Thyroid gland (tissue), 4 donors: ENCODE measurements at regions of chr11 and their contacts with region 1.

Region 1: DNA sequence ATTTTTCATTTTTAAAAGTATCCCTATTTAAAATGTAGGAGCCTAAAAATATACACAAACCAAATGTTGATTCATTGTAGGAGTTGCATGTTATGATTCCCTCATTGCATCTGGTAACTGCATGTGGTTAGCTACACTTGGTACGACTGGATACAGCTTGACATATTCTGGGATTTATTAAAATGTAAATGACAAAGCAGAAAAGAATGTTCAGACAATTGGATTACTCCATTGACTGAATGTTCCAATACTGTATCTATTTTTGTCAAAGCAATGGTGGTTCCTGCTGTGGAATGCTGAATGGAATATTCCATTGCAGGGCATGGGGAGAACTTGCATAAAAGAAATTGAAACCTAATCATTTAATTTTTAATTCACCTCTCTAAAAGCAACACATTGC is 30.8 kb downstream of the BLID start:
- DNase-seq: no peak
- H3K4me3 ChIP-seq: no peak overlapping the region
- H3K27ac ChIP-seq: no peak overlapping the region
- H3K4me1 ChIP-seq: peaks cover 18 to 20% of the 10 kb centered on the region in 2 donors
- H3K27me3 ChIP-seq: no peaks in the 10 kb centered on the region
- CTCF ChIP-seq: no peak
- POLR2A ChIP-seq: no peak

Region 2: GRCh38 chr11:121661880-121662486 is 423.3 kb before region 1 on chr11:
- intact Hi-C with region 1: loop called (anchors 5 kb)
- DNase-seq: no peak
- H3K4me3 ChIP-seq: no peak overlapping the region
- H3K27ac ChIP-seq: peak overlapping the region in 1 of 3 donors; percentile 10
- H3K4me1 ChIP-seq: peaks cover under 1 to 3% of the 10 kb centered on the region in 2 donors
- H3K27me3 ChIP-seq: no peaks in the 10 kb centered on the region
- CTCF ChIP-seq: no peak
- POLR2A ChIP-seq: no peak